ENCODE measurements at regions of chr6 and their contacts with region 1.

Region 1: GRCh38 chr6:64330694-64331307 is 695.2 kb downstream of the PHF3 start:
- DNase-seq: peak; percentile 77
- ATAC-seq: peak; percentile 91
- H3K4me3 ChIP-seq: no peak overlapping the region
- H3K27ac ChIP-seq: no peak overlapping the region
- H3K4me1 ChIP-seq: no peaks in the 10 kb centered on the region
- H3K27me3 ChIP-seq: no peaks in the 10 kb centered on the region
- CTCF ChIP-seq: peak; percentile 82
- POLR2A ChIP-seq: no peak
- RAD21 ChIP-seq: peak; percentile 87

Region 2: GRCh38 chr6:64012351-64013001 is 318.3 kb before region 1 on chr6:
- CTCF ChIA-PET with region 1: interaction called, 42 read pairs
- POLR2A ChIA-PET with region 1: no interaction called
- dilution Hi-C with region 1: no loop called
- in situ Hi-C with region 1: loop called (anchors 5 kb)
- intact Hi-C with region 1: loop called (anchors 1 kb)
- DNase-seq: peak; percentile 78
- ATAC-seq: peak; percentile 98
- H3K4me3 ChIP-seq: no peak overlapping the region
- H3K27ac ChIP-seq: no peak overlapping the region
- H3K4me1 ChIP-seq: no peaks in the 10 kb centered on the region
- H3K27me3 ChIP-seq: no peaks in the 10 kb centered on the region
- CTCF ChIP-seq: peak; percentile 91
- POLR2A ChIP-seq: no peak
- RAD21 ChIP-seq: peak; percentile 94

Region 3: DNA sequence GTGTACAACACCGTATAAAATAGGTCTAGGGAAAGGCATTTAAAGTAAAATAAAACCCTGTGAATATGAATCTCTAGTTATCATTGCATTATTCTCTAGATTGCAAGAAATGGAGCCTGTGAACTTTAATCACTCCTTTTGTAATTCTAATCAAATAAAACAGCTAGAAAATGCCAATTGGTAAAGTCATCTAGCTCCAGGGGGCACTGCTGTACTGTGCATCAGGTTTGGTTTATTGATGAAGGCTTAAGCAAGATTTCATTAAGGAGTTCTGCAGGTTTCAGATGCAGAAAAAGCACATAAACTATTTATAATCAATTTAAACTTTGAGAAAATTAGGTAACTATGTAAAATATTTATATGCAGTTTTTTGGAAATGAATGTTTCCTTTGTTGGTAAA is 50.2 kb before region 1 on chr6:
- CTCF ChIA-PET with region 1: interaction called, 13 read pairs
- POLR2A ChIA-PET with region 1: no interaction called
- dilution Hi-C with region 1: no loop called
- in situ Hi-C with region 1: no loop called
- intact Hi-C with region 1: loop called (anchors 1 kb)
- DNase-seq: peak; percentile 65
- ATAC-seq: peak; percentile 54; the same call in 1 of the 2 replicates
- H3K4me3 ChIP-seq: no peak overlapping the region
- H3K27ac ChIP-seq: no peak overlapping the region
- H3K4me1 ChIP-seq: no peaks in the 10 kb centered on the region
- H3K27me3 ChIP-seq: no peaks in the 10 kb centered on the region
- CTCF ChIP-seq: peak; percentile 70
- POLR2A ChIP-seq: no peak
- RAD21 ChIP-seq: peak; percentile 87

Measured in IMR-90 (cell line).